CD4-positive, alpha-beta T cell (primary cell): ENCODE measurements at regions of chr17 and their contacts with region 1.

Region 1: GRCh38 chr17:43428524-43428923 is 29.7 kb downstream of the ARL4D start:
- DNase-seq: no peak
- ATAC-seq: no peak
- H3K4me3 ChIP-seq: no peak overlapping the region
- H3K4me3 Mint-ChIP-seq: no peak overlapping the region
- H3K27ac ChIP-seq: no peak overlapping the region
- H3K27ac Mint-ChIP-seq: no peak overlapping the region
- H3K4me1 ChIP-seq: no peaks in the 10 kb centered on the region
- H3K4me1 Mint-ChIP-seq: no peaks in the 10 kb centered on the region
- H3K27me3 ChIP-seq: peaks cover 13 to 15% of the 10 kb centered on the region in 2 experiments
- H3K27me3 Mint-ChIP-seq: peaks cover 50% of the 10 kb centered on the region
- CTCF ChIP-seq: no peak

Region 2: DNA sequence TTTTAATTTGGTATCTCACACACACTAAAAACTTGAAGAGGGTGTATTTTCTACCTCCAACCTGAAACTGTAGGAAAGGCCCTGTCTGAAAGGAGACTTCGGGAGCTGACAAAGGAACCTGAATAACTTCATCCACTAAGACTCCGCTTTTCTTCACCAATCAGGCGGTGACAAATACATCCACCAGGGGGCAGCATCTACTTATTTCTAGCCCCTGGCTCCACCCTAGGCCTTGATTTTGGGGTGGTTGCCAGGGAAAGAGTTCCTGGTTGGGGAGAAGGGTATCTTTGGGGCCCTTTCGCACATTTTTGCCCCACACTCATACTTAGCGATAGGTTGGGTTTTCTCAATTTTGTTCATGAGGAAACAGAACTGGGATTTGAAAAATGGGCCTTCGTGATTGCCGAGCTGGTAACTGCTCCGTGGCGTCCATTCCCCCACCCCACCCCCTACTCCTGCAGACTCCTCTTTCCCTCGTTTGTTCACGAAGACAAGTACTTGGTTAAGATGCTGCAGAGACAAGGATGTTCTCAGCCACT is 34.5 kb before region 1 on chr17:
- CTCF ChIA-PET with region 1: interaction called, 4 read pairs
- POLR2A ChIA-PET with region 1: no interaction called
- intact Hi-C with region 1: loop called (anchors 2 kb)
- DNase-seq: peak; percentile 77 to 94 (median 89)
- ATAC-seq: peak; percentile 27
- H3K4me3 ChIP-seq: no peak overlapping the region
- H3K4me3 Mint-ChIP-seq: peak overlapping the region; percentile 49
- H3K27ac ChIP-seq: peak overlapping the region in 1 of 2 donors; percentile 14
- H3K27ac Mint-ChIP-seq: peak overlapping the region; percentile 16
- H3K4me1 ChIP-seq: peaks cover 40% of the 10 kb centered on the region
- H3K4me1 Mint-ChIP-seq: peaks cover 37% of the 10 kb centered on the region
- H3K27me3 ChIP-seq: no peaks in the 10 kb centered on the region
- H3K27me3 Mint-ChIP-seq: no peaks in the 10 kb centered on the region
- CTCF ChIP-seq: peak; percentile 90

Region 3: GRCh38 chr17:43983515-43984411 is 555.2 kb after region 1 on chr17:
- CTCF ChIA-PET with region 1: no interaction called
- POLR2A ChIA-PET with region 1: no interaction called
- intact Hi-C with region 1: no loop called
- DNase-seq: peak in 2 of 14 experiments; percentile 5 to 20
- ATAC-seq: no peak
- H3K4me3 ChIP-seq: no peak overlapping the region
- H3K4me3 Mint-ChIP-seq: no peak overlapping the region
- H3K27ac ChIP-seq: no peak overlapping the region
- H3K27ac Mint-ChIP-seq: no peak overlapping the region
- H3K4me1 ChIP-seq: peaks cover 15% of the 10 kb centered on the region
- H3K4me1 Mint-ChIP-seq: no peaks in the 10 kb centered on the region
- H3K27me3 ChIP-seq: peaks cover 35 to 63% of the 10 kb centered on the region in 2 experiments
- H3K27me3 Mint-ChIP-seq: peaks cover 84% of the 10 kb centered on the region
- CTCF ChIP-seq: no peak